CD8-positive, alpha-beta memory T cell (primary cell): ENCODE measurements at regions of chr20 and their contacts with region 1.

Region 1: DNA sequence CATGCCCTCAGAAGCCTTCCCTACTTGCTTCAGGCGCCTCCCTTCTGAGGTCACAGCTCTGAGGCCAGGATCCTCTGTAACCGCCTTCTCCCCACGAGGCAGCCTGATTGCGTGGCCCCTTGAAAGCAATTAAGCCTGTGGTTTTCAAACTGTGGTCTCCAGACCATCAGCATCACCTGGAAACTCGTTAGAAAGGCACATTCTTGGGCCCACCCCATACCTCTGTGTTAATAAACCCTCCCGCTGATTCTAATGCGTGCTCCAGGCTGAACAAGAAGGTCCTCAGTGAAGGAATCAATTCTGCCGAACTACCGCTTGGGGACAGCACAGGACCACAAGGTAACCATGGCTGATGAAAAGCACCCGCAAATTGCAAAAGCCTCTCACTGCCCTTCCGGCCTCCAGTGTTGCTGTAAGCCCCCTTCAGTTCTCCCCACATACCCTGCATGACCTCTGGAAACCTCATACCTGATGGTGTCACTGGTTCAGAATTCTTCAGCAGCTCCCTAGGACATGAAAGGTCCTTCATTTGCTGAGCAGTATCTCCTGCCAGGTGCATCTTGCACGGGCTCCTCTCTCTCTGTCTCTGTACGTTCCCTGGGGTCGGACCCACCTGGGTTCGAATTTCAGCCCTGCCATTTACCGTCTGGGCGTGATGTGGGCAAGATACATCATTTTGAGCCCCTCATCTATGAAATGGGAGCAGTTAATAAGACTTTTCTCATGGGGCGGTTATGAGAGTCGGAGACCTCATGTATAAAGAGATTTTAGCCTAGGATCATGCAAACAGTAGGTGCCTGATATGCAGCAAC is 93.3 kb upstream of the RNF24 start:
- DNase-seq: peak; percentile 31 to 68 (median 51)
- H3K4me3 ChIP-seq: no peak overlapping the region
- H3K4me3 Mint-ChIP-seq: no peak overlapping the region
- H3K27ac ChIP-seq: no peak overlapping the region
- H3K27ac Mint-ChIP-seq: no peak overlapping the region
- H3K4me1 ChIP-seq: no peaks in the 10 kb centered on the region
- H3K4me1 Mint-ChIP-seq: peaks cover 4 to 8% (median 6%) of the 10 kb centered on the region in 3 donors
- H3K27me3 ChIP-seq: no peaks in the 10 kb centered on the region
- H3K27me3 Mint-ChIP-seq: peaks cover 0 to 30% of the 10 kb centered on the region in 2 donors

Region 2: DNA sequence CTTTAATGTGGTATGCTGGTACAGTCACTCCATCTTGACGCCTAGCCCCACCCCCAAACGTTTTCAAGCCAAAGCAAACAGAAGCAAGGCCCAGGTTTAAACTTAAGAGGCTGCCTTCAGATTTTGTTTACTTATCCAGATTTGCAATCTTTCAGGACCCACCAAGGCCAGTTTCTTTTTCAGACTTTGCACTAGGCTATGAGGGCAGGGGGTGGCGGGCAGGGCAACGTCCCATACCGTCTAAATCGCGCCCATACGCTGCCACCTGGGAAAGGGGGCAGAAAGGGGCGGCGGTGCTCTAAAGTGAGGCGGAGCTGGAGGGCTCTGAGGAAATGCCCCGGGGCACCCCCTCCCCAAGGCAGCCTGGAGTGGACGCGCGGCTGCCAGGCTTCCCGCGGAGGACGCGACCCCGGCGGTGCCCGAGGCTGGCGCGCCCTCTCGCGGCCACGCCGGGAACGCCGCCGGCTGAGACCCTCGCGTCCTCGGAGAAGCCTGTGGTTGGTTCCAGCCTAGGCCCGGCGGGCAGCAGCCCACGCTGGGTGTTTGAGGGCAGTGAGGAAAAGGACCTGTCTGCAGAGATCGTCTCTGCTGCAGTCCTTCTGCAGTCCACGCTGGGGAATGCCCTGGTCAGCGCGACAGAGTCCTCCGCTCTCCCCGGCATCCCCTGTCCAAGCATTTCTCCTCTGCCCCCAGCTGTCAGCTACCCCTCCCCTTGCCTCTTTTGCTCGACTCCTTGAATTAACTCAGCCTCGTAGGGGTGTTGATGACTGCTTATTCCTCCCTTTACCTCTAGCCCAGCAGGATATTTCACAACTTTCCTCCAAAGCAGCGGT is 483.8 kb after region 1 on chr20:
- CTCF ChIA-PET with region 1: interaction called, 12 read pairs
- POLR2A ChIA-PET with region 1: no interaction called
- DNase-seq: peak in 4 of 5 donors; percentile 21 to 46 (median 27)
- H3K4me3 ChIP-seq: peak overlapping the region; percentile 9
- H3K4me3 Mint-ChIP-seq: peak overlapping the region in 6 of 7 donors; percentile 69 to 88 (median 74)
- H3K27ac ChIP-seq: no peak overlapping the region
- H3K27ac Mint-ChIP-seq: peak overlapping the region in 1 of 8 donors; percentile 17
- H3K4me1 ChIP-seq: peaks cover 8% of the 10 kb centered on the region
- H3K4me1 Mint-ChIP-seq: peaks cover 5 to 16% (median 7%) of the 10 kb centered on the region in 3 donors
- H3K27me3 ChIP-seq: no peaks in the 10 kb centered on the region
- H3K27me3 Mint-ChIP-seq: peaks cover 18 to 45% of the 10 kb centered on the region in 2 donors